ENCODE measurements at regions of chr18 and their contacts with region 1.

Region 1: DNA sequence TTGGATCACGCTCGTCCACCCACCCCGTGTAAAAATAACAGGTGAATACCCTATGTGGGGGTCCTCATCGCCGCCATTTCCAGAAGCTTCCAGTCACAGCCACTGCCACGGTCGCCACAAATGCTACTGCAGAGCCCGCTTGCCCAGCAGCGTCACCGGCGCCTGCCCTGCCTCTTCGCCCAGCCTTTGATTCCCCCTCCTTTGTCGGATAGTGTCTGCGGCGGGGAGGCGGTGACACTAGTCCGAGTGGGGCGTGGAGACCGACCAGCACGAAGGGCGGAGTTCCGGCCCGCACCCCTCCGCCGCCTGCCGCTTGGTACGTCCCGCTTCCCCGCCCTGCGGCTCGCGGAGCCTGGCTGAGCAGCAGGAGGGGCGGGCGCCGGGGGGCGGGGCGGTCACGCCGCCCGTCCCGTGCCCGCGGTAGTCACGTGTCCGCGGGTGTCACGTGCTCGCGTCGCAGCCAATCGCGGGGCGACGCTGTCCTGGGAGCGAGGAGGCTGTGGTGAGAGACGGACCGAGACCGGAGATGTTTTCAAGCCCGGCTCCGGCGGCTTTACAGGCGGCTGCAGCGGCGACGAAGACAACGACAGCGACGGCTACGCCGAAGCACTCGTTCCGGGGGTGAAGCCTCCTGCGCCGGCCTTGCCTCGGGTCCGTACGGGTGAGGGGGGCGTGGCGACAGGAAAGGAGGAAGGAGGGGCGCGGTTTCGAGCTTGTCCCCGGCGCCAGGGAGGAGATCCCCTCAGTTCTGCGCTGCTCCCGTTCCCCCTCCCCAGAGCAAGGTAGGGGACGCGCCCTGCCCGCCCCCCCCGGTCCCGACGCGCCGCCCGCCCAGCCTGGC is at the start of gene ANKRD12:
- DNase-seq: peak; percentile 99
- H3K4me3 Mint-ChIP-seq: peak within 1 kb of the TSS; percentile 95
- H3K27ac Mint-ChIP-seq: peak within 1 kb of the TSS; percentile 98
- H3K4me1 Mint-ChIP-seq: peaks cover 53% of the 10 kb centered on the region
- H3K27me3 Mint-ChIP-seq: no peaks in the 10 kb centered on the region
- total RNA-seq, gene ANKRD12: 77.8 to 83.9 TPM

Region 2: GRCh38 chr18:9082711-9083510 is 53.6 kb before region 1 on chr18:
- CTCF ChIA-PET with region 1: interaction called, 24 read pairs
- POLR2A ChIA-PET with region 1: interaction called, 103 read pairs
- intact Hi-C with region 1: loop called (anchors 1 kb)
- DNase-seq: peak; percentile 82
- H3K4me3 Mint-ChIP-seq: peak overlapping the region; percentile 70
- H3K27ac Mint-ChIP-seq: peak overlapping the region; percentile 100
- H3K4me1 Mint-ChIP-seq: peaks cover 51% of the 10 kb centered on the region
- H3K27me3 Mint-ChIP-seq: no peaks in the 10 kb centered on the region

Region 3: GRCh38 chr18:9109523-9109922 is 27.0 kb before region 1 on chr18:
- CTCF ChIA-PET with region 1: interaction called, 9 read pairs
- POLR2A ChIA-PET with region 1: interaction called, 178 read pairs
- intact Hi-C with region 1: no loop called
- DNase-seq: no peak
- H3K4me3 Mint-ChIP-seq: peak overlapping the region; percentile 90
- H3K27ac Mint-ChIP-seq: peak overlapping the region; percentile 75
- H3K4me1 Mint-ChIP-seq: peaks cover 82% of the 10 kb centered on the region
- H3K27me3 Mint-ChIP-seq: no peaks in the 10 kb centered on the region

Region 4: GRCh38 chr18:9147440-9148202 is 11.1 kb after region 1 on chr18:
- CTCF ChIA-PET with region 1: no interaction called
- POLR2A ChIA-PET with region 1: interaction called, 12 read pairs
- intact Hi-C with region 1: no loop called
- DNase-seq: peak; percentile 25
- H3K4me3 Mint-ChIP-seq: peak overlapping the region; percentile 7
- H3K27ac Mint-ChIP-seq: peak overlapping the region; percentile 78
- H3K4me1 Mint-ChIP-seq: peaks cover 71% of the 10 kb centered on the region
- H3K27me3 Mint-ChIP-seq: no peaks in the 10 kb centered on the region

Region 5: DNA sequence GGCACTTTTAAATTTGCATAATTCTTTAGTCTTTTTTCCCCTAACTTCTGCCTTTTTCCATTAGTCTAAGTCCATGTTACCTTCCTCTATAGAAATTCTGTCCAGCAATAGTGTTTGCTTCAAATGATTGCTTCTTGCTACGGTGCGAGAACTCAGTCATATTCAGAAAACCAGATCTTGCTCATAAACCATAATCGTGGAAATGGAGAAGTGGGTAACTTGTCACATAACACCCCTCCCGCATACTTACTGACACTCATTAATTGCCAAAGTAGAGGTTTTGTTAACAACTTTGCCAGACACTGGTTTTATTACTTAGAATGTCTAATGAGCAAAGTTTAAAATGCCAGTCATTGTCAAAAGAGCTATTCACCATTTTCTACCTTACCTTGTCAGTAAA is 103.7 kb after region 1 on chr18:
- CTCF ChIA-PET with region 1: no interaction called
- POLR2A ChIA-PET with region 1: interaction called, 6 read pairs
- intact Hi-C with region 1: loop called (anchors 5 kb)
- DNase-seq: no peak
- H3K4me3 Mint-ChIP-seq: no peak overlapping the region
- H3K27ac Mint-ChIP-seq: peak overlapping the region; percentile 61
- H3K4me1 Mint-ChIP-seq: peaks cover 27% of the 10 kb centered on the region
- H3K27me3 Mint-ChIP-seq: no peaks in the 10 kb centered on the region

Region 6: GRCh38 chr18:9913526-9914333 is 777.2 kb after region 1 on chr18 and contains the start of gene VAPA:
- CTCF ChIA-PET with region 1: no interaction called
- POLR2A ChIA-PET with region 1: no interaction called
- intact Hi-C with region 1: loop called (anchors 10 kb)
- DNase-seq: peak; percentile 95
- H3K4me3 Mint-ChIP-seq: peak within 1 kb of the TSS; percentile 84
- H3K27ac Mint-ChIP-seq: peak within 1 kb of the TSS; percentile 91
- H3K4me1 Mint-ChIP-seq: peaks cover 25% of the 10 kb centered on the region
- H3K27me3 Mint-ChIP-seq: peaks cover 3% of the 10 kb centered on the region
- total RNA-seq, gene VAPA: 152 to 159 TPM